ENCODE measurements at regions of chr3 and their contacts with region 1.

Region 1: GRCh38 chr3:172536993-172537419 is 13.8 kb upstream of the TNFSF10 start:
- DNase-seq: peak; percentile 30
- H3K4me3 Mint-ChIP-seq: peak overlapping the region; percentile 48
- H3K27ac Mint-ChIP-seq: peak overlapping the region; percentile 90
- H3K4me1 Mint-ChIP-seq: peaks cover 37% of the 10 kb centered on the region
- H3K27me3 Mint-ChIP-seq: no peaks in the 10 kb centered on the region

Region 2: DNA sequence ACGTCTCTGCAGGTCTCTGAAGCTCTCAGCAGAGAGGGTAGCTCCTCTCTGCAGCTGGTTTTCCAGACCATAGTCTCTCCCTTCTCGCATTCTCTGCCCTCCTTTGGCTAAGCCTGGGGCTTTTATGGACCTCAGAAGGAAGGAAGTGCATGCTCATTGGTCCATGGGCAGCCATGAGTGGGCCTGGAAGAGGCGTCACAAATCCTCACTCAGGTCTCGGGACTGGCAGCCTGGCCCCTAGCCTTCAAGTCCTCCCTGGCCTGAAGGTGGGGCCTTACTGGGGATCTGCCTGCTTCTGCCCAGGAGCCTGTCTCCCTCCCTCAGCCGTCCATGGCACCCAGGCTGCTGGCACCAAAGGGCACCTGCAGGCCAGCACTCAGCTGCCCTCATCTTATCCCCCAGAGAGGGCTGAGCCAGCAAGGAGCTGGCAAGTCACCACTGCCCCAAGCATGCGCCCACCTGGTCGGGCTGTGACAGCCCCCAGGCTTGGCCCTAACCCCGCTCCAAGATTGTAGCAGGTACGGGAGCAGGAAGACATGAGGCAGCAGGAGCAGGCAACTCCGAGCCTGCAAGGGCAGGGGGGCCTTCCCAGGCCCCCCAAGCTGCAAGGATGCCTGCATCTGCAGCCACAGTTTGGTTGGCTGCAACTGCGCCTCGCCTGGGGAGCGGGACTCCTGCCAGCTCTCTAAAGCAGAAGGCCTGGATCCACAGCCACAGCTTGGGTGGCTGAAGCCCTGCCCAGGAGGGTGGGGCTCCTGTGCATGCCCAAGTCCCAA is 126.1 kb before region 1 on chr3:
- CTCF ChIA-PET with region 1: no interaction called
- POLR2A ChIA-PET with region 1: no interaction called
- intact Hi-C with region 1: no loop called
- DNase-seq: no peak
- H3K4me3 Mint-ChIP-seq: no peak overlapping the region
- H3K27ac Mint-ChIP-seq: no peak overlapping the region
- H3K4me1 Mint-ChIP-seq: no peaks in the 10 kb centered on the region
- H3K27me3 Mint-ChIP-seq: peaks cover 10% of the 10 kb centered on the region

Region 3: DNA sequence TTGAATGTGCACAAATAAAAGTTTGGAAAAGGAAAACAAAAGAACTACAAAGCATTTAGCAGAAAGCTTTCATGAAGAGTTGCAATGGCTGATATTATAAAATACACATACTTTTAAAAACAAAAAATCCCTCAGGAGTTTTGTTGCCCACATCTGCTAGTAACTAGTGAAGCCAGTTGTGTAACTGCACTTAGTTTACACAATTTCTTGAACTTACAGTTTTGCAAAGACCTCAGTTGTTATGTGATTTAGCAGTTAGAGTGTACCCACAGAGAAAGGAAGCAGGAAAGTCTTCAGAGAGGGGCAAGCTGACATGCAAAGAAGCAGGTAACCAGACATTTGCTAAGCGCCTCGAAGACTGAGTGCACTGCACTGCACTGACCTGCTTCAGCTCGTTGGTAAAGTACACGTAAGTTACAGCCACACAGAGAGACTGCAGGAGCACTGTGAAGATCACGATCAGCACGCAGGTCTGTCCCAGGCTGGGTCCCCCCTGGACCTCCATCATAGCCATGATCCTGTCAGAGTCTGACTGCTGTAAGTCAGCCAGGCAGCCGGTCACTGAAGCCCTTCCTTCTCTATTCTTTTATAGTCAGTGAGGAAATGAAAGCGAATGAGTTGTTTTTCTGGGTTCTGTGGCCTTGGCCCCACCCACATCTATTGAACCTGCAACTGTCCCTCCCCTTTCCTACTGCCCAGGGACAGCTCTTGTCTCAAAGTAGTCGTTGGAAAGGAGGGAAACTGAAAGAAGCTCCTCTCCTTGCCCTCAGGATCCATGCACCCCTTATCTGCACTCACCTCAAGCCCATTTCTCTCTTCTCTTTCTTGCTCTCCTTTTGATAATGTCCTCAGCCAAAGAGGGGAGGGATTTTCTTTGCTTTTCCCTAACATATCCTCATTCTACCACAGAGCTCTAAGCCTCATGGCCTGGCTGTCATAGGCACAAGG is 13.9 kb before region 1 on chr3 and contains the start of gene TNFSF10:
- CTCF ChIA-PET with region 1: no interaction called
- POLR2A ChIA-PET with region 1: no interaction called
- intact Hi-C with region 1: loop called (anchors 1 kb)
- DNase-seq: peak; percentile 84
- H3K4me3 Mint-ChIP-seq: peak within 1 kb of the TSS; percentile 94
- H3K27ac Mint-ChIP-seq: peak within 1 kb of the TSS; percentile 94
- H3K4me1 Mint-ChIP-seq: peaks cover 48% of the 10 kb centered on the region
- H3K27me3 Mint-ChIP-seq: no peaks in the 10 kb centered on the region
- total RNA-seq, gene TNFSF10: 30.1 to 31.8 TPM

Region 4: GRCh38 chr3:172580680-172581401 is 43.8 kb after region 1 on chr3:
- CTCF ChIA-PET with region 1: no interaction called
- POLR2A ChIA-PET with region 1: no interaction called
- intact Hi-C with region 1: loop called (anchors 1 kb)
- DNase-seq: no peak
- H3K4me3 Mint-ChIP-seq: peak overlapping the region; percentile 18
- H3K27ac Mint-ChIP-seq: peak overlapping the region; percentile 68
- H3K4me1 Mint-ChIP-seq: peaks cover 78% of the 10 kb centered on the region
- H3K27me3 Mint-ChIP-seq: peaks cover 2% of the 10 kb centered on the region